Heart left ventricle (tissue), 16 donors: ENCODE measurements at regions of chr7 and their contacts with region 1.

Region 1: GRCh38 chr7:1225441-1226185 is 7.1 kb upstream of the UNCX start:
- DNase-seq: no peak
- ATAC-seq: peak in 3 of 4 donors; percentile 41 to 58 (median 47)
- H3K4me3 ChIP-seq: no peak overlapping the region
- H3K27ac ChIP-seq: no peak overlapping the region
- H3K4me1 ChIP-seq: peaks cover 0 to 25% (median 4%) of the 10 kb centered on the region in 12 donors
- H3K27me3 ChIP-seq: peaks cover 71 to 100% (median 95%) of the 10 kb centered on the region in 9 donors
- CTCF ChIP-seq: peak; percentile 59 to 86 (median 80)
- POLR2A ChIP-seq: no peak

Region 2: GRCh38 chr7:1412322-1413261 is 187.0 kb after region 1 on chr7:
- intact Hi-C with region 1: loop called in 5 of 10 experiments (anchors 5 kb)
- DNase-seq: peak; percentile 59 to 88 (median 75)
- ATAC-seq: peak; percentile 78 to 95 (median 90)
- H3K4me3 ChIP-seq: peak overlapping the region in 2 of 12 donors; percentile 10 to 12
- H3K27ac ChIP-seq: no peak overlapping the region
- H3K4me1 ChIP-seq: peaks cover 0 to 11% (median 5%) of the 10 kb centered on the region in 12 donors
- H3K27me3 ChIP-seq: peaks cover 10 to 53% (median 28%) of the 10 kb centered on the region in 9 donors
- CTCF ChIP-seq: peak; percentile 57 to 86 (median 72)
- POLR2A ChIP-seq: no peak

Region 3: DNA sequence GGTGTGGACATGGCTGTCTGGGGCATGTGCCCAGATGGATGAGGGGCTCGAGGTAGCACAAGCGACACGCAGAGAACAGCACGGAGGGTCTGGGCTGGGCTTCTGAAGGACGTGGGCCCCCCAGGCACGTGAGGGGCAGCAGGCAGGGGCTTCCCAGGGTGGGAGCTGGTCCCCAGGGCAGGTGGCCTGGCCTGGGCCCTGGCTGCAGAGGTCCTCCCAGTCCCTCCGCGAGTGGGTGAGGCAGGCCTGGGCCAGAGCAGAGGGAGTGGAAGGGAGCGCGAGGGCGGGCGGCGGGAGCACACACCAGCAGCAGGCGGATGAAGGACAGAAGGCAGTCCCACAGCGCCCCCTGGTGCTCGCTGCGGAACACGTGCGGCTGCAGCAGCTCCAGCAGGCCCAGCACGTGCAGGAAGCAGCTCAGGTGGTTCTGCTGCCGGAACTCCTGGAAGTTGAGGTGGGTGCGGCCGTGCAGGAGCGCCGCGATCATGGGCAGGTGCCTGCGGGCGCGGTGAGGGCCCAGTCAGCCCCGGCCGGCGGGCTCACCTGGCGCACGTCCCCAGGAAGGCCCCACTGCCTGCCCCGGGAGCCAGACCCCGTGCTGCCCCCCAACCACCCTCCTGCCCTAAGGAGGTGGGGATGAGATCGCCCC is 248.4 kb after region 1 on chr7:
- intact Hi-C with region 1: loop called in 9 of 10 experiments (anchors 1 to 10 kb)
- DNase-seq: peak; percentile 85 to 91 (median 87)
- ATAC-seq: peak; percentile 52 to 79 (median 72)
- H3K4me3 ChIP-seq: no peak overlapping the region
- H3K27ac ChIP-seq: peak overlapping the region in 1 of 12 donors; percentile 26
- H3K4me1 ChIP-seq: peaks cover 0 to 11% (median 2%) of the 10 kb centered on the region in 12 donors
- H3K27me3 ChIP-seq: no peaks in the 10 kb centered on the region
- CTCF ChIP-seq: peak; percentile 87 to 96 (median 91)
- POLR2A ChIP-seq: no peak